Caco-2 (cell line): ENCODE measurements at regions of chr3 and their contacts with region 1.

Region 1: GRCh38 chr3:184289426-184289938 is 9.6 kb upstream of the PSMD2 start:
- DNase-seq: peak; percentile 64 to 75
- H3K4me3 ChIP-seq: no peak overlapping the region
- H3K4me3 Mint-ChIP-seq: no peak overlapping the region
- H3K27ac Mint-ChIP-seq: no peak overlapping the region
- H3K4me1 ChIP-seq: no peaks in the 10 kb centered on the region
- H3K4me1 Mint-ChIP-seq: no peaks in the 10 kb centered on the region
- H3K27me3 ChIP-seq: no peaks in the 10 kb centered on the region
- H3K27me3 Mint-ChIP-seq: peaks cover 4% of the 10 kb centered on the region
- CTCF ChIP-seq: peak; percentile 40 to 63

Region 2: GRCh38 chr3:184133840-184134731 is 155.4 kb before region 1 on chr3:
- CTCF ChIA-PET with region 1: no interaction called
- POLR2A ChIA-PET with region 1: no interaction called
- intact Hi-C with region 1: no loop called
- DNase-seq: peak; percentile 88 to 92
- H3K4me3 ChIP-seq: peak overlapping the region; percentile 78
- H3K4me3 Mint-ChIP-seq: peak overlapping the region; percentile 98
- H3K27ac Mint-ChIP-seq: peak overlapping the region; percentile 93
- H3K4me1 ChIP-seq: peaks cover 9% of the 10 kb centered on the region; the same call in 1 of the 2 replicates
- H3K4me1 Mint-ChIP-seq: peaks cover 7% of the 10 kb centered on the region
- H3K27me3 ChIP-seq: no peaks in the 10 kb centered on the region
- H3K27me3 Mint-ChIP-seq: no peaks in the 10 kb centered on the region
- CTCF ChIP-seq: no peak

Region 3: DNA sequence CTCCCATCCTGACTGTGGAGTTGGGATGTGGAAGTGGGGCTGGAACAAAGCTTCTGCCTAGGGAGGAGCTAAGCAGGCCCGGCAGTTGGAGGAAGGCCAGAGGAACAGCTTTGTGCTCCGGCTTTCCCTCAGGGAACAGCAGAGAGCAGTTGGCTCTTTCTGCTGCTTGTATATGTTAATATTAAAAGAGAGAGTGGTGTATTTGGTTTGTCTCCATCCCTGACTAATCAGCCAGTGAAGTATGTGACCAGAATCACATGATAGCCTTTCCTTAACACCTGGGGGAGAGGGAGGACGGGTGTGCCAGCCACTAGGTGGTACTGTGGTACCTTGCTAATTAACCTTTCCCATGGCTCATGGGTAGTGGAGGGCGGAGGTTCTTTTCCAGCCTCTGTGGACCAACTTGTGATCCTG is 144.4 kb before region 1 on chr3:
- CTCF ChIA-PET with region 1: interaction called, 3 read pairs
- POLR2A ChIA-PET with region 1: no interaction called
- intact Hi-C with region 1: loop called (anchors 2 kb)
- DNase-seq: peak; percentile 64
- H3K4me3 ChIP-seq: no peak overlapping the region
- H3K4me3 Mint-ChIP-seq: no peak overlapping the region
- H3K27ac Mint-ChIP-seq: no peak overlapping the region
- H3K4me1 ChIP-seq: no peaks in the 10 kb centered on the region
- H3K4me1 Mint-ChIP-seq: no peaks in the 10 kb centered on the region
- H3K27me3 ChIP-seq: no peaks in the 10 kb centered on the region
- H3K27me3 Mint-ChIP-seq: no peaks in the 10 kb centered on the region
- CTCF ChIP-seq: peak; percentile 36 to 64

Region 4: GRCh38 chr3:184261270-184261853 is 28.1 kb before region 1 on chr3 and contains the start of gene CAMK2N2:
- CTCF ChIA-PET with region 1: interaction called, 12 read pairs
- POLR2A ChIA-PET with region 1: no interaction called
- intact Hi-C with region 1: no loop called
- DNase-seq: peak; percentile 82 to 86
- H3K4me3 ChIP-seq: peak within 1 kb of the TSS; percentile 50
- H3K4me3 Mint-ChIP-seq: peak within 1 kb of the TSS; percentile 83
- H3K27ac Mint-ChIP-seq: no peak within 1 kb of the TSS
- H3K4me1 ChIP-seq: peaks cover 9% of the 10 kb centered on the region; the same call in 1 of the 2 replicates
- H3K4me1 Mint-ChIP-seq: peaks cover 8% of the 10 kb centered on the region
- H3K27me3 ChIP-seq: peaks cover 4% of the 10 kb centered on the region
- H3K27me3 Mint-ChIP-seq: peaks cover 18% of the 10 kb centered on the region
- CTCF ChIP-seq: no peak
- total RNA-seq, gene CAMK2N2: 0.46 and 0.66 TPM in 2 replicates